ENCODE measurements at regions of chr1 and their contacts with region 1.

Region 1: GRCh38 chr1:223726380-223727001 is 14.2 kb downstream of the CAPN2 start:
- DNase-seq: peak; percentile 95
- H3K4me3 Mint-ChIP-seq: peak overlapping the region; percentile 80
- H3K27ac Mint-ChIP-seq: peak overlapping the region; percentile 96
- H3K4me1 Mint-ChIP-seq: peaks cover 65% of the 10 kb centered on the region
- H3K27me3 Mint-ChIP-seq: no peaks in the 10 kb centered on the region

Region 2: GRCh38 chr1:223748773-223749733 is 22.6 kb after region 1 on chr1:
- intact Hi-C with region 1: loop called (anchors 2 kb)
- DNase-seq: peak; percentile 91
- H3K4me3 Mint-ChIP-seq: peak overlapping the region; percentile 76
- H3K27ac Mint-ChIP-seq: no peak overlapping the region
- H3K4me1 Mint-ChIP-seq: peaks cover 17% of the 10 kb centered on the region
- H3K27me3 Mint-ChIP-seq: no peaks in the 10 kb centered on the region

Region 3: GRCh38 chr1:223827193-223827663 is 100.7 kb after region 1 on chr1:
- intact Hi-C with region 1: no loop called
- DNase-seq: no peak
- H3K4me3 Mint-ChIP-seq: no peak overlapping the region
- H3K27ac Mint-ChIP-seq: no peak overlapping the region
- H3K4me1 Mint-ChIP-seq: peaks cover 49% of the 10 kb centered on the region
- H3K27me3 Mint-ChIP-seq: no peaks in the 10 kb centered on the region